Activated CD4-positive, alpha-beta T cell treated with anti-CD3 and anti-CD28 coated beads, Interleukin-2, amount 10 ng/mL, durations not matched to agents 24 days and 14 days (primary cell): ENCODE measurements at regions of chr16 and their contacts with region 1.

Region 1: GRCh38 chr16:2023098-2023925 is 3.4 kb upstream of the NHERF2 start:
- DNase-seq: peak; percentile 99
- H3K4me3 Mint-ChIP-seq: peak overlapping the region; percentile 85
- H3K27ac Mint-ChIP-seq: peak overlapping the region; percentile 48
- H3K4me1 Mint-ChIP-seq: peaks cover 12% of the 10 kb centered on the region
- H3K27me3 Mint-ChIP-seq: peaks cover 49% of the 10 kb centered on the region

Region 2: GRCh38 chr16:1614456-1615102 is 408.7 kb before region 1 on chr16:
- intact Hi-C with region 1: no loop called
- DNase-seq: peak; percentile 79
- H3K4me3 Mint-ChIP-seq: peak overlapping the region; percentile 87
- H3K27ac Mint-ChIP-seq: peak overlapping the region; percentile 55
- H3K4me1 Mint-ChIP-seq: peaks cover 30% of the 10 kb centered on the region
- H3K27me3 Mint-ChIP-seq: no peaks in the 10 kb centered on the region

Region 3: DNA sequence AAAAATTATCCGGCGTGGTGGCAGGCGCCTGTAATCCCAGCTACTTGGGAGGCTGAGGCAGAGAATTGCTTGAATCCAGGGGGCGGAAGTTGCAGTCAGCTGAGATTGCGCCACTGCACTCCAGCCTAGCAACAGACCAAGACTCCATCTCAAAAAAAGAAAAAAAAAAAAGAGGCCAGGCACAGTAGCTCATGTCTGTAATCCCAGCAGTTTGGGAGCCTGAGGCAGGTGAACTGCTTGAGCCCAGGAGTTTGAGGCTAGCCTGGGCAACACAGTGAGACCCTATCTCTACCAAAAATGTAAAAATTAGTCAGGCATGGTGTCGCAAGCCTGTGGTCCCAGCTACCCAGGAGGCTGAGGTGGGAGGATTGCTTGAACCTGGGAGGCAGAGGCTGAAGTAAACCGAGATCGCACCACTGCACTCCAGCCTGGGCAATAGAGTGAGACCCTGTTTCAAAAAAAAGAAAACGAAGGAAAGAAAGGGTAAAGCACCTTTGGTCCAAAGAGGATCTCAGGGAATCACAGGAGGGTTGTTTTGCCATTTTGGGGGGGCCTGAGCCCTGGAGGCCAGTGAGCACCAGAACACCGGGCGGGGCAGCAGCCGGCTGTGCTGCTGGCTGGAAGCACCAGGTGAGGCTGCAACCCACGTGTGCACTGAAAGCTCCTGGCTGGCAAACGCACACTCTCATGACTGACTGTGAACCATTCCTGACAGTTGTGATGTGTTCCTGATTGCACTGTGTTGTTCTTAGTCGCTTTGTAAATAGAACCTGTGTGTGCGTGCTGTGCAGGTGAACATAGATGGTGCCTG is 123.5 kb before region 1 on chr16:
- intact Hi-C with region 1: no loop called
- DNase-seq: no peak
- H3K4me3 Mint-ChIP-seq: no peak overlapping the region
- H3K27ac Mint-ChIP-seq: no peak overlapping the region
- H3K4me1 Mint-ChIP-seq: no peaks in the 10 kb centered on the region
- H3K27me3 Mint-ChIP-seq: peaks cover 2% of the 10 kb centered on the region

Region 4: DNA sequence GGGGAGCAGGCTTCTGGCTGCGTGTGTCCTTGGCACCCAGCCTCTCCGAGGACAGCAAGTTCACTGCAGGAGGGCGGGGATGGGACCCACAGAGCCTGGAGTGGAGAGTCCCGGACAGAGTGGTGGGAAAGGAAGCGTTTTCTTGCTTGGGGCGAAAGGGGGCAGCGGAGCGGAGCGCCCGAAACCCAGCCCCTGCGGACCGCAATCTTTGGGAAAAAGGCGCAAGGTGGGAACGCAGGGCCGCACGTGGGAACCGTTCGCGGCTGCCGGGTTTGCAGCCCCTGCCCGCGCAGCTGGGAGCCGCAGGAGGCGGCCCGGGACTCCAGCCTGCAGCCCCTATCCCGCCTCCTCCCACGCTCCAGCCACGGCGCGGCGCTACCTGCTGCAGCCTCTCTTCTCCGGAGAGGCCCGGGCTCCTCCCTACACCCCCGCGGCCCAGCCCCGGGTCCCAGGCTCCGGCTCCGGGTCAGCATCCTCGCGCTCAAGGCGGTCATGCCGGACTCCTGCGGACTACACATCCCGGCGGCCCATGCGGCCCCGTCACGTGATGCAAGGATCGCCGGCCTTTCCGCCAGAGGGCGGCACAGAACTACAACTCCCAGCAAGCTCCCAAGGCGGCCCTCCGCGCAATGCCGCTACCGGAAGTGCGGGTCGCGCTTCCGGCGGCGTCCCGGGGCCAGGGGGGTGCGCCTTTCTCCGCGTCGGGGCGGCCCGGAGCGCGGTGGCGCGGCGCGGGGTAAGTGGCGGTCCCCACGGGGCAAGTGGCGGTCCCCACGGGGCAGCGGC is 24.2 kb after region 1 on chr16 and contains the starts of genes NTHL1 and TSC2:
- intact Hi-C with region 1: loop called (anchors 1 kb)
- DNase-seq: peak; percentile 99
- H3K4me3 Mint-ChIP-seq: peak within 1 kb of the TSS; percentile 92
- H3K27ac Mint-ChIP-seq: peak within 1 kb of the TSS; percentile 83
- H3K4me1 Mint-ChIP-seq: peaks cover 14% of the 10 kb centered on the region
- H3K27me3 Mint-ChIP-seq: no peaks in the 10 kb centered on the region
- total RNA-seq, gene NTHL1: 50.3 and 57.7 TPM in 2 replicates
- total RNA-seq, gene TSC2: 98.8 and 99.8 TPM in 2 replicates

Region 5: DNA sequence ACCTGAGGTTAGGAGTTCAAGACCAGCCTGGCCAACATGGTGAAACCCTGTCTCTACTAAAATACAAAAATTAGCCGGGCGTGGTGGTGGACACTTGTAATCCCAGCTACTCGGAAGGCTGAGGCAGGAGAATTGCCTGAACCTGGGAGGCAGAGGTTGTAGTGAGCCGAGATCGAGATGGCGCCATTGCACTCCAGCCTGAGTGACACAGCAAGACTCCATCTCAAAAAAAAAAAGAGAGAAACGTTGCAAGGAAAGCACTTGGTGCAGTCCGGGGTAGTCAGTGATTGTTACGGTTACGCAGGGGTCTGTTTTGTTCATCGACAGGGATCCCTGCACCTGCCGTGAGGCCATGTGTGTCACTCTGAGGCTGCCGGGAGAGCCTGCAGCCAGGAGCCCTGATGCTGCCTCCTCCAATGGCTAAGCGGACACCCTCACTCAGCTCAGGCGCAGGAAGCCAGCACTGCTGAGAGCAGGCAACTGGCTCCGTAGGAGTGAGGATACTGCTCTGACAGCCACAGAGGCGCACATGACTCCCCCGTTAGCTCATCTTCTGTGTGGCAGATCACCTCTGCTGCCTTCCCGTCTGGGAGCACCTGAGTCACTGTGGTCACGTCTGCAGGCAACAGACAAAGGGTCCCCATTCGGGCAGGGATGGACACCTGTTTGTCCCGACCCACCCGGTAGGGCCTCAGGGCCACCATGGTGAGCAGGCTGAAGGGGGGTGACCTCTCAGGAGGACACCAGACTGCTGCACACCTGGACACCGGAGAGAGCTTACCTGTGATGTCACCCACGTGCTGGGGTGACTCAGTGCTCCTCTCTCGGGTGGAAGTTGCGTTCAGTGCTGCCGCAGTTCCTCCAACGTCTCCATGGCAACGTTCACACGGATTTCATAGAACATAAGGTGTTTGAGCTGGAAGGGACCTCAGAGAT is 119.9 kb after region 1 on chr16:
- intact Hi-C with region 1: loop called (anchors 1 kb)
- DNase-seq: no peak
- H3K4me3 Mint-ChIP-seq: no peak overlapping the region
- H3K27ac Mint-ChIP-seq: no peak overlapping the region
- H3K4me1 Mint-ChIP-seq: peaks cover 2% of the 10 kb centered on the region
- H3K27me3 Mint-ChIP-seq: peaks cover 6% of the 10 kb centered on the region

Region 6: DNA sequence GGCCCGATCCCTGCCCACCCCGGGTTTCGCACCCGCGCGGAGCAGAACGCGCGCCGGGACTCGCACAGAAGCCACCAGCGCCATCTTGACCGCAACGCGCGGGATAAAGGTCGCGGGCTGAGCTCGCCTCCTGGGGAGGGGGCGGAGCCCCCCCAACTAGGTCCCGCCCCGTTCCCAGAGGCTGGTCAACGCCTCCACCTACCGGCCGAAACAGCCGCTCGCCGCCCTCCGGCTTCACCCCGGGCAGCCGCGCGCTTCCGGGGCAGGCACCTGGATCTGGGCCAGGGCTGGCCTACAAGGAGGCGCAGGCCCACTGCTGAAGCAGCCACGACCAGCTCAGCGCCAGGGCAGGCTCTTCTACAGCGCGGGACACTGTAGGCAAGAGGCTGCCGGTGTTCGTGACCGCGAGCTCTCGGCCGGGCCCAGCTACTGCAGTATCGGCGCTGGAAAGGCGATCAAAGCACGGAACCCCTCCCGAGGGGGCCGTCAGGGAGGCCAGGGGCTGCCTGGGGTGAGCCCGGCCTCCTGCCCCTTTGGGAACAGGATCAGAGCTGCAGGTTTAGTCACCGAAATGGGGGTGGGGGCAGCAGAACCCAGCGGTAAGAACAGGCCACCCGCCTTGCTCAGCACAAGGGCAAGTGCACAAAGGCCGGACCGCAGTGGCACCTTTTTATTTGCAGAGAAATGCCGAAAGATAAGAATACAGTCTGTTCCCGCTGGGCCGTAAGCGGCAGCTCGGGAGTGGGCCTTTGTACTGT is 228.3 kb after region 1 on chr16 and contains the start of gene ECI1:
- intact Hi-C with region 1: no loop called
- DNase-seq: peak; percentile 95
- H3K4me3 Mint-ChIP-seq: peak within 1 kb of the TSS; percentile 93
- H3K27ac Mint-ChIP-seq: peak within 1 kb of the TSS; percentile 90
- H3K4me1 Mint-ChIP-seq: peaks cover 6% of the 10 kb centered on the region
- H3K27me3 Mint-ChIP-seq: no peaks in the 10 kb centered on the region
- total RNA-seq, gene ECI1: 34.1 and 38.7 TPM in 2 replicates